ENCODE measurements at regions of chr2 and their contacts with region 1.

Region 1: GRCh38 chr2:100269889-100270288 is 52.4 kb downstream of the LONRF2 start:
- DNase-seq: no peak
- H3K4me3 ChIP-seq: no peak overlapping the region
- H3K27ac ChIP-seq: no peak overlapping the region
- H3K4me1 ChIP-seq: no peaks in the 10 kb centered on the region
- H3K27me3 ChIP-seq: no peaks in the 10 kb centered on the region
- CTCF ChIP-seq: no peak
- POLR2A ChIP-seq: no peak

Region 2: GRCh38 chr2:100113990-100114433 is 155.9 kb before region 1 on chr2:
- intact Hi-C with region 1: no loop called
- DNase-seq: no peak
- H3K4me3 ChIP-seq: no peak overlapping the region
- H3K27ac ChIP-seq: no peak overlapping the region
- H3K4me1 ChIP-seq: no peaks in the 10 kb centered on the region
- H3K27me3 ChIP-seq: no peaks in the 10 kb centered on the region
- CTCF ChIP-seq: no peak
- POLR2A ChIP-seq: no peak

Region 3: GRCh38 chr2:100381240-100381639 is 111.4 kb after region 1 on chr2:
- intact Hi-C with region 1: loop called (anchors 5 kb)
- DNase-seq: peak; percentile 91
- H3K4me3 ChIP-seq: no peak overlapping the region
- H3K27ac ChIP-seq: no peak overlapping the region
- H3K4me1 ChIP-seq: no peaks in the 10 kb centered on the region
- H3K27me3 ChIP-seq: no peaks in the 10 kb centered on the region
- CTCF ChIP-seq: peak; percentile 86 to 98 (median 95)
- POLR2A ChIP-seq: no peak